Left cardiac atrium (tissue), 4 donors: ENCODE measurements at regions of chr4 and their contacts with region 1.

Region 1: GRCh38 chr4:40924096-40924792 is 174.5 kb downstream of the NSUN7 start:
- DNase-seq: peak; percentile 68
- ATAC-seq: peak; percentile 62 to 67

Region 2: DNA sequence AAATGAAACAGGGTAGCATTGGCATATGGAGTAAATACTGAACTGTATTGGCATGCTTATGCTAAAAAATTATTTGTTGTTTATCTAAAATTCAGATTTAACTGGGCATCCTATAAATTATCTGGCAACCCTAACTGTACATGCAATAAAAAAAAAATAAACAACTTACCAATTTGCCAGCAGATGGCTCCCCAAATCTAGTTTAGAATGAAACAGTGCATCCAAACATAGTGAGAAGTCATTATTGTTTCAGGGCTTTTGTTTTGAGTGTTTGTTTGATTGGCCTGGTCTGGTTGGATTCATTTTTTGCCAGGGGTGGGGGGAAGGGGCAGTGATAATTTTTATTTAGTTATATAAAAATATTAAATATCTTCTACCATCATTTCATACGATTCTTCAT is 187.3 kb before region 1 on chr4:
- intact Hi-C with region 1: loop called in 1 of 2 experiments (anchors 10 kb)
- DNase-seq: no peak
- ATAC-seq: no peak

Region 3: GRCh38 chr4:40976343-40976742 is 52.1 kb after region 1 on chr4:
- intact Hi-C with region 1: loop called in 1 of 2 experiments (anchors 5 kb)
- DNase-seq: no peak
- ATAC-seq: peak; percentile 41 to 47